ENCODE measurements at regions of chr19 and their contacts with region 1.

Region 1: GRCh38 chr19:48795055-48795684 is 15.7 kb downstream of the BCAT2 start:
- DNase-seq: peak; percentile 96 to 98
- ATAC-seq: peak; percentile 94 to 99
- H3K4me3 ChIP-seq: peak overlapping the region; percentile 43
- H3K27ac ChIP-seq: peak overlapping the region; percentile 64 to 83
- H3K4me1 ChIP-seq: peaks cover 5% of the 10 kb centered on the region; the same call in 2 of the 3 replicates
- CTCF ChIP-seq: peak; percentile 99
- EP300 ChIP-seq: no peak
- POLR2A ChIP-seq: no peak
- RAD21 ChIP-seq: peak; percentile 89 to 98

Region 2: GRCh38 chr19:48738557-48739399 is 56.4 kb before region 1 on chr19:
- CTCF ChIA-PET with region 1: interaction called, 12 read pairs
- POLR2A ChIA-PET with region 1: interaction called, 3 read pairs
- DNase-seq: peak; percentile 87 to 95
- ATAC-seq: peak; percentile 80 to 85
- H3K4me3 ChIP-seq: peak overlapping the region; percentile 59
- H3K27ac ChIP-seq: peak overlapping the region; percentile 82 to 89
- H3K4me1 ChIP-seq: peaks cover 16% of the 10 kb centered on the region
- CTCF ChIP-seq: peak; percentile 92
- EP300 ChIP-seq: no peak
- POLR2A ChIP-seq: peak; percentile 64
- RAD21 ChIP-seq: peak; percentile 34 to 81; a peak in 4 of 5 replicates

Region 3: GRCh38 chr19:48752498-48753365 is 42.4 kb before region 1 on chr19 and contains the start of gene FUT1:
- CTCF ChIA-PET with region 1: no interaction called
- POLR2A ChIA-PET with region 1: no interaction called
- DNase-seq: no peak
- ATAC-seq: peak; percentile 68 to 84
- H3K4me3 ChIP-seq: peak within 1 kb of the TSS; percentile 47
- H3K27ac ChIP-seq: peak within 1 kb of the TSS; percentile 57 to 75; a peak in 5 of 6 replicates
- H3K4me1 ChIP-seq: peaks cover 32% of the 10 kb centered on the region
- CTCF ChIP-seq: no peak
- EP300 ChIP-seq: no peak
- POLR2A ChIP-seq: 0 out of 2 replicates have a peak, but pooled peaks have one; percentile 7
- RAD21 ChIP-seq: no peak
- polyA plus RNA-seq, gene FUT1: 1.4 and 1.5 TPM in 2 replicates

Region 4: DNA sequence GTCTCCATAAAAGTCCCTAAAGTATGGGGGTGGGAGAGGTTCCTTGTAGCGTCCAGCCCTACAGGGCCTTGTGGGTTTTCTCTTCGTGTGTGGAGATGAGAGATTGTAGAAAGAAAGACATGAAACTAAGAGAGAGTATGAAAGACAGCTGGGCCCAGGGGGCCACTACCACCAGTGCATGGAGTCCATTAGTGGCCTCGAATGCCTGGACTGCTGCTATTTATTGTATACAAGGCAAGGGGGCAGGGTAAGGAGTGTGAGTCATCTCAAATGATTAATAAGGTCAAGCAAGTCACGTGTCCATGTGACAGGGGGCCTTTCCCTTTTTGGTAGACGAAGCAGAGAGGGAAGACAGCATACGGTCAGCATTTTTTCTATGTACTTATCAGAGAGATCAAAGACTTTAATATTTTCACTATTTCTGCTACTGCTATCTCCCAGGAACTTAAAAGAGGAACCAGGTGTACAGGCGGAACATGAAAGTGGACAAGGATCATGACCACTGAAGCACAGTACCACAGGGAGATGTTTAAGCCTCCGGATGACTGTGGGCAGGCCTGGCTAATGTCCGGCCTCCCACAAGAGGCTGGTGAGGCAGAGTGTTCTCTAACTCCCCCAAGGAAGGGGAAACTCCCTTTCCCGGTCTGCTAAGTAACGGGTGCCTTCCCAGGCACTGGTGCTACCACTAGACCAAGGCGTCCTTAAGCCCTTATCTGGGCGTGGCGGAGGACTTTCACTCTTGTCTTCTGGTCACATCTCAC is 14.4 kb before region 1 on chr19:
- CTCF ChIA-PET with region 1: interaction called, 123 read pairs
- POLR2A ChIA-PET with region 1: no interaction called
- DNase-seq: peak in 1 of 2 experiments; percentile 62
- ATAC-seq: peak in 1 of 2 experiments; percentile 13; a peak in 3 of 6 replicates
- H3K4me3 ChIP-seq: no peak overlapping the region
- H3K27ac ChIP-seq: 0 out of 6 replicates have a peak overlapping the region, but pooled peaks of 1 of the 2 experiments have one; percentile 29
- H3K4me1 ChIP-seq: peaks cover 10% of the 10 kb centered on the region
- CTCF ChIP-seq: no peak
- EP300 ChIP-seq: no peak
- POLR2A ChIP-seq: no peak
- RAD21 ChIP-seq: no peak

Region 5: GRCh38 chr19:48819366-48819816 is 24.2 kb after region 1 on chr19:
- CTCF ChIA-PET with region 1: interaction called, 151 read pairs
- POLR2A ChIA-PET with region 1: interaction called, 3 read pairs
- DNase-seq: peak in 1 of 2 experiments; percentile 89
- ATAC-seq: peak; percentile 77 to 86
- H3K4me3 ChIP-seq: no peak overlapping the region
- H3K27ac ChIP-seq: peak overlapping the region; percentile 52 to 78; a peak in 5 of 6 replicates
- H3K4me1 ChIP-seq: peaks cover 33% of the 10 kb centered on the region
- CTCF ChIP-seq: no peak
- EP300 ChIP-seq: peak in 1 of 2 experiments; percentile 47; a peak in 1 of 5 replicates
- POLR2A ChIP-seq: no peak
- RAD21 ChIP-seq: no peak

Region 6: GRCh38 chr19:48835734-48836088 is 40.5 kb after region 1 on chr19:
- CTCF ChIA-PET with region 1: interaction called, 927 read pairs
- POLR2A ChIA-PET with region 1: interaction called, 18 read pairs
- DNase-seq: peak; percentile 94
- ATAC-seq: peak; percentile 87 to 88
- H3K4me3 ChIP-seq: peak overlapping the region; percentile 49
- H3K27ac ChIP-seq: peak overlapping the region; percentile 80 to 90
- H3K4me1 ChIP-seq: peaks cover 7% of the 10 kb centered on the region; the same call in 2 of the 3 replicates
- CTCF ChIP-seq: peak; percentile 98
- EP300 ChIP-seq: no peak
- POLR2A ChIP-seq: no peak
- RAD21 ChIP-seq: peak; percentile 97 to 98